Activated CD8-positive, alpha-beta T cell treated with anti-CD3 and anti-CD28 coated beads for 36 hours (primary cell): ENCODE measurements at regions of chr12 and their contacts with region 1.

Region 1: DNA sequence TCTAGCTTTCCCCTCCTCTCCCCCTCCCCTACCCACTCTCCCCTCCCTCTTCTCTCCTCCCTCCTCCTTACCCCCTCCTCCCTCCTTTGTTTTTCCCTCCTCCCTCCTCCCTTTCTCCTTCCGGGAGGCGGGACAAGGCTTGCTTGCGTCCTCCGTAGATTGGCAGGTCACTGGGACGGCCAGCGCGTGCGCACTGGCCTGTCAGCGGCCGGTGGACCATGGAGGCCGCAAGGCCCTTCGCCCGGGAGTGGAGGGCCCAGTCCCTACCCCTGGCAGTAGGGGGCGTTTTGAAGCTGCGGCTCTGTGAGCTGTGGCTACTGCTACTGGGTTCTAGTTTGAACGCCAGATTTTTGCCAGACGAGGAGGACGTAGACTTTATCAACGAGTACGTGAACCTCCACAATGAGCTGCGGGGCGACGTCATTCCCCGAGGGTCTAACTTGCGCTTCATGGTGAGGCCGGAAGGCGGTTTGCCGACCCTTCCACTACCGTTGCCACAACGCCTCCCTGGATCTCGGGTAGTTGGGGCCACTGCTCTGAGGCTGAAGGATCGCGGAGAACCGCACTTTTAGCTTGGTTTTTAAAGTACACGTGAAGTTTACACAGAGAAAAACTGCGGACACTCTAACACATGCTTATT is at the start of gene GLIPR1L2:
- DNase-seq: peak; percentile 93
- ATAC-seq: peak; percentile 97
- H3K4me3 Mint-ChIP-seq: peak within 1 kb of the TSS; percentile 87
- H3K27ac Mint-ChIP-seq: peak within 1 kb of the TSS; percentile 95
- H3K4me1 Mint-ChIP-seq: peaks cover 36% of the 10 kb centered on the region
- H3K27me3 Mint-ChIP-seq: no peaks in the 10 kb centered on the region
- CTCF ChIP-seq: peak; percentile 67
- total RNA-seq, gene GLIPR1L2: 0.27 to 0.43 TPM

Region 2: DNA sequence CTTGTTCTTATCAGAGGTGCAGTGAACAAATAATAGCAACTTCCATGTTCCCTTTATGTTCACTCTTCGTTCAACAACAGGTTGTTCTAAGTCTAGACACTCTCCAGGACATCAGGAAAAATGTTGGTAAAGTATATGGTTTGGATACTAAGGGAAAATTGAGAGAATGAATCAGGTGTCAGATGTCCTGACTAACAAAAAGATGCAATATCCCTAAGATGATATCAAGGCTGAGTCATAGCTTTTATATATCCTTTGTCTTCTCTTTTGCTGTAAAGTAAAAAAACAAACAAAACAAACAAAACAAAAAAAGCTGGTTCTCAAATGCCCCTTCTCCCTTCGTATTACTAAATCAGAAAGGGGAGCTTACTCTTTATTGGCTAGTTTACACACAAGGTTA is 45.5 kb before region 1 on chr12:
- CTCF ChIA-PET with region 1: no interaction called
- POLR2A ChIA-PET with region 1: no interaction called
- intact Hi-C with region 1: loop called (anchors 5 kb)
- DNase-seq: no peak
- ATAC-seq: no peak
- H3K4me3 Mint-ChIP-seq: no peak overlapping the region
- H3K27ac Mint-ChIP-seq: no peak overlapping the region
- H3K4me1 Mint-ChIP-seq: peaks cover 13% of the 10 kb centered on the region
- H3K27me3 Mint-ChIP-seq: no peaks in the 10 kb centered on the region
- CTCF ChIP-seq: no peak

Region 3: DNA sequence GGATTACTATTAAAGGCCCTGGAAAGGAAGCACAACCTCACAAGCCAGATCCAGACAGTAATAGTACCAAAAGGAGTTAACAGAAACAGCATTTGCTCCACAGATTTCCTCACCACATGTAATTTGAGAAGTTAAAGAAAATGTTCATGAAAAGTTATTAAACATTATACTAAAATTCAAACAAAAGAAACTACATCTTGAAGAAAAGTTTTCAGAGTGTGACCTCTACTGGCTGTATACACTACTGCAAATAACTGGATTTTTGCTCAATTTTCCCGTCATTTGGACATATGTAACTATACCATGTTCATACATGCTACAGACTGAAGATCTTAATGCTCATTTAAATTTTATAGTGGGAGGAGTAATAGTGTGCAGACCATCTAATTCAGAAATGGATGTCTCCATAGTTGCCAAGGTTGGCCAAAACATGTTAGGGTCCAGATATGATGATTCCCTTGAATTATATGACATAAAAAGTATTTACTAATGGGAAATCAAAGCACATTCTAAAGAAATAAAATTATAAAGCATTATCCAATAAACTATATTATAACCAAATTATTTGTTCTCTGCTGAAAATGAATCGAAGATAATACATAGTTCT is 114.8 kb after region 1 on chr12:
- CTCF ChIA-PET with region 1: interaction called, 15 read pairs
- POLR2A ChIA-PET with region 1: interaction called, 4 read pairs
- intact Hi-C with region 1: loop called (anchors 5 kb)
- DNase-seq: no peak
- ATAC-seq: peak; percentile 70
- H3K4me3 Mint-ChIP-seq: no peak overlapping the region
- H3K27ac Mint-ChIP-seq: peak overlapping the region; percentile 57
- H3K4me1 Mint-ChIP-seq: peaks cover 35% of the 10 kb centered on the region
- H3K27me3 Mint-ChIP-seq: no peaks in the 10 kb centered on the region
- CTCF ChIP-seq: peak; percentile 74